ENCODE measurements at regions of chr10 and their contacts with region 1.

Region 1: DNA sequence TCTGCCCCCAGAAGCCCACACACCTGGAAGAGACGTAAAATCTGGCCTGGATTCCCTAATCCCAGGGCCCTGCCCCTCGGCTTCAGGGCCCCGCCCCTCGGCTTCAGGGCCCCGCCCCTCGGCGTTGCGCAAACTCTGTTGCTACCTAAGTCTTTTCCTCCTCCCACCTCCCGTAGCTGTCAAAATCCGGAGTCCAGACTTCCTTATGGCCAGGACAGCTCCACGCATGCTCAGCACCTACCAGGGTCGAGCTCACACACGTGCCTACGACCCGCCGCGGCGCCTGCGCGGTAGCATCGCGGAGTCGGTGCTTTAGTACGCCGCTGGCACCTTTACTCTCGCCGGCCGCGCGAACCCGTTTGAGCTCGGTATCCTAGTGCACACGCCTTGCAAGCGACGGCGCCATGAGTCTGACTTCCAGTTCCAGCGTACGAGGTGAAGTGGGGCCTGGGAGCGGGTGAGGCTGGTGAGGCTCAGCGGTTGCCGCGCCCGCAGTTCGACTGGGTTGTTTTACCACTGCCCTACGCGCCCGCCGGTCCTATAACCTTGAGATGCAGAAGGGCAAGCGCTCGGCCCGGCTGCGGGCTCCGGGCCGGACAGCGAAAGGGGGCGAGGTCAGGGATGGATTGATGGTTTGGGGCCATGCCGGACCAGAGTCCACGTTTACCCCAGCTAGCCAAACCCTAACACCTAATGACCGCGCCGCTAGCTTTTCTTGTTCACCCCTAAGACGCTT is at the start of gene CISD1:
- DNase-seq: peak; percentile 99
- ATAC-seq: peak; percentile 94
- total RNA-seq, gene CISD1: 176 TPM

Region 2: DNA sequence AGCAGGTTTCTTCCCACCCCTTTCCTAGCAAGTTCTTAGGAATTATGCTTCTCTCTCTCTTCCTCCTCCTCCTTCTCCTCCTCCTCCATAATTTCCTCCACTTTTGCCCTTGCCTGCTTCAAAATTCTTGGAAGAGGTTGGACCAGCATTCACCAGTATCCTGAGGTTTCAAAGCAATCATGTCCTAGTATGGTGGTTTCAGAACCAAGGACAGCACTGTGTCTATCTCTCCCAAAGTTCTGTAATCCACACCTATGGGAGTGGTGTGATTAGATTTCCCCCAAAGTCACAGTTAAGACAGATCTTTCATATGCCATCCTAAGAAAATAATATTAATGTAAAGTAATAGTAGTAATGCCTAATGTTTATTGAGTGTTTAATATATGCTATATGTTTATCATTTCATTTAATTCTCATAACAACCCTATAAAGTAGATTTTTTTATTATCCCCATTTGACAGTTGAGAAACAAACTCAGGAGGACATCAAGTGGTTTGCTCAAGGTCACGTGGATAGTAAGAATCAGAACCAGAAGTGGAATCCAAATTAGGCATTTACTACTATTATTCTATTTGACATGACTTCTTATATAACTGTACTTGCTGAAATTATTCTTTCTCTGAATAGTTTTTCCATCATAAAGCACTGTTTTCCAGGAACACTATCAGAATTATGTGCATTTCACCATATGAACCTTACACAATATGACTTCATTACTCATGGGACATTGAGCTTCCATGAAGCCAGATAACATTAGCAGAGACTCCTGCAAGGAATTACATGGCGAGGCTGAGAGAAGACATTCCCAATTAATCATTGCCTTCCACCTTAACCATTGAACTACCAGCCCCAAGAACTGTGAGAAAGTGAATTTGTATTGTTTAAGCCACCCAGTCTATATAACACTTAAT is 92.8 kb before region 1 on chr10:
- intact Hi-C with region 1: no loop called
- DNase-seq: no peak
- ATAC-seq: no peak

Region 3: GRCh38 chr10:58334817-58335305 is 65.8 kb after region 1 on chr10 and contains the start of gene UBE2D1:
- intact Hi-C with region 1: loop called (anchors 2 kb)
- DNase-seq: peak; percentile 96
- ATAC-seq: peak; percentile 96
- total RNA-seq, gene UBE2D1: 55.3 TPM

Region 4: DNA sequence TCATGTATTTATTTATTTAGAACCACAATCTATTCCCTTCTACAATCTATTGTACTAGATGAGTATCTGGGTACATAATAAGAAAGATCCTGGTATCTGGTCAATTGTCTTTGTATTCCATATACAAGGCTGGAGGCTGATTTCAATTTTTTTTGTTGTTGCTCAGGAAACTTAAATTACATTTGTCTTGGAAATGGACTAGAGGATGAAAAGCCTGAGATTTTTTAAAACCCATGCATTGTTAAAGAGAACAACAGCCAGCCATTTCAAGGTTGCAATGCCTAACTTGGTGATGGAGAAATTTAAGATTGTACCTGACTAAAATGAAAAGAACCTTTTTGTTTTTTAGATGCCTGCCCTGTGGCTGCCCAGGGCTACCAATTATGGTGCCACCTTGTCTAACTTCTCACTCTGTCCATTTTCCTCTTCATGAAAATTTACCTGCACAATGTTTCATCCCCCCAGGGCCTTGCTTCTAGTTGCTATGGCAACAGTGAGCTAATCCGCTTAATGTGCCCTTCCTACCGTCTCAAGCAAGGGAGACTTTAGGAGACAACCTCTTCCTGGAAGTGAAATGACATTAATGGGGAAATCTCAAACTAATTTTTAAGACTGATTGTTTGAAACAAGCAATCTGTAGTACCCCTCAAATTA is 703.7 kb after region 1 on chr10:
- intact Hi-C with region 1: no loop called
- DNase-seq: no peak
- ATAC-seq: no peak

Measured in Right ventricle myocardium inferior (tissue), 1 donor.